ENCODE measurements at regions of chr7 and their contacts with region 1.

Region 1: DNA sequence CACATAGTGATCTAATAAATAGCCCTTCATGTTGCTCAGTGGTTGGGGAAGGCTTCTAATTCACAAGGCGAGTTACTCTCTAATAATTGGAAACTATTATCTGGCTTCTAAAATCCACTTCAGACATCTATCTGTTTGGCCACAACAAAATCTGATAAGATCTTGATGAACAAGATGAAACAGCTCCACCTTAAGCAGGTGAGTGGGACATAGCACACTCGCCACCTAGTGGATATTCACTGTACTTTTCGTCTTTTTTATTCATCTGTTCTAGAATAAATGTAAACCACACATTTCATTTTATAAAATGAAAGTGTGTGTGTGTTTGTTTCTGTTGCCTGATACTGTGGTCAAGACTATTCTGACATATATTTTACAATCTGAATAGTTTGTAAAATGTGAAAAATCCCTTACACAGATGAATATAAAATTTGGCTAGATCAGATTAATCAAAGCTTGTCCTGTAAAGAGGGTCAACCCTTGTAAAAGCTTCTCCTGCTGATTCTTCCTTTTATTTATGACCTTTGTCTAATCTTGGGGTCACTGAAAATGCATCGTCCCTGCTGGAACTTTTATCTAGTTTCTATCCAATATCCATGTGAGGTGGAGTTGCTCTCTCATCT is 26.5 kb upstream of the CNTNAP2 start:
- DNase-seq: peak; percentile 7
- ATAC-seq: peak; percentile 53
- H3K4me3 Mint-ChIP-seq: no peak overlapping the region
- H3K27ac Mint-ChIP-seq: no peak overlapping the region
- H3K4me1 Mint-ChIP-seq: no peaks in the 10 kb centered on the region
- H3K27me3 Mint-ChIP-seq: no peaks in the 10 kb centered on the region

Region 2: GRCh38 chr7:144854839-144855424 is 1235.2 kb before region 1 on chr7:
- CTCF ChIA-PET with region 1: no interaction called
- POLR2A ChIA-PET with region 1: no interaction called
- intact Hi-C with region 1: loop called (anchors 5 to 10 kb)
- DNase-seq: no peak
- ATAC-seq: no peak
- H3K4me3 Mint-ChIP-seq: no peak overlapping the region
- H3K27ac Mint-ChIP-seq: no peak overlapping the region
- H3K4me1 Mint-ChIP-seq: no peaks in the 10 kb centered on the region
- H3K27me3 Mint-ChIP-seq: peaks cover 2% of the 10 kb centered on the region

Region 3: DNA sequence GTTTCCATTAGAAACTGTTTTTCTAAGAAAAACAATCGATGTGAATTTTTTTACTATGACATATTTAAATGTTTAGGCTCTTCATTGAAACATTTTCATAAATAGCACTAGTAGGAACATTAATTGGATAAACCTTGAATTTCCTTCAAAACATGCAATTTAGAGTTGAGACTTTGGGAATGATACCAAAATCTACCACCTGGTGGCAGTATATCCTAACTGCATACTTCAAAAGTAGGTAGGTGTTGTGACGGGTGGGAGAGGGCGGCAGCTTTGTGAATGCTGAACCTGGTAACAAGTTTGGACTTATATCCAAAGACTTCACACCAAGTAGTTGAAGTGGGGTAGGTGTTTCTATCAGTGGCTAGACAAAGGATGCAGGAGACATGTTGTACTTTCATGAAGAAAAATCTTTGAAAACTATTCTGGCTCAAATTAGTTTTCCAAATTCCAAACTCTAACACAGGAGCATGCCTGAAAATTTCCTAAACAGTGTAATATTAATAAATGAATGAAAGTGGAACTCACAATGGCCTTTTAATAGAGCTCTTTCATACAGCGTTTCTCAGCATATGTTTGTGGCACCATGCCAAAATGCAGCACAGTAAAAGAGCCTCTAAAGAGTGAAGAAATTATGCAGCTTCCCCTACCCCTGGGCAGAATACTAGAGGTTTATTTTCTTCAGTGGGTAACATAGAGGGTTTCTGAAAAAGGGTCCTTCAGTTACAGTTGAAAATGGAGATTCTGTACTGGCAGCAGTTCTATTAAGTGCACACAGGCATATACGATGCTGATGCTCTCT is 1053.3 kb before region 1 on chr7:
- CTCF ChIA-PET with region 1: interaction called, 9 read pairs
- POLR2A ChIA-PET with region 1: no interaction called
- intact Hi-C with region 1: loop called (anchors 1 kb)
- DNase-seq: peak; percentile 45
- ATAC-seq: peak; percentile 57
- H3K4me3 Mint-ChIP-seq: no peak overlapping the region
- H3K27ac Mint-ChIP-seq: no peak overlapping the region
- H3K4me1 Mint-ChIP-seq: no peaks in the 10 kb centered on the region
- H3K27me3 Mint-ChIP-seq: peaks cover 15% of the 10 kb centered on the region

Region 4: DNA sequence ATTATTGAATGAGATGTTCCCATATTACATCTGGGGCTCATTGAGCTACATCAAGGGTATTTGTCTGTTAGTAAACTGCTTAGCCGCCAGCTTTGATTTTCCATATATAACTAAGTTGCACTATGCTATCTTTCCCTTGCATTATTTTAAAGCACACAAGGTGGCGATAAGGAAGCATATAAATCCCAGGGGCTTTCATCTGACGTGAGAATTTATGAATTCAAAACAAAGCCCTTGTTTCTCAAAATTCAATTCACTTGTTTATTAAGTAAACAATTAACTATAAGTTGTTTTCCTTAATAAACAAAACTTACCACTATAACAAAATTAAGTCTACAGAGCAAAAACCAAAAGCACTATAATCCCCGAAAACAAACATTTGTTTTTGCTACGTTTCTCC is 920.2 kb before region 1 on chr7:
- CTCF ChIA-PET with region 1: no interaction called
- POLR2A ChIA-PET with region 1: no interaction called
- intact Hi-C with region 1: loop called in 1 of 2 experiments (anchors 2 kb)
- DNase-seq: no peak
- ATAC-seq: no peak
- H3K4me3 Mint-ChIP-seq: no peak overlapping the region
- H3K27ac Mint-ChIP-seq: no peak overlapping the region
- H3K4me1 Mint-ChIP-seq: no peaks in the 10 kb centered on the region
- H3K27me3 Mint-ChIP-seq: peaks cover 4% of the 10 kb centered on the region

Region 5: DNA sequence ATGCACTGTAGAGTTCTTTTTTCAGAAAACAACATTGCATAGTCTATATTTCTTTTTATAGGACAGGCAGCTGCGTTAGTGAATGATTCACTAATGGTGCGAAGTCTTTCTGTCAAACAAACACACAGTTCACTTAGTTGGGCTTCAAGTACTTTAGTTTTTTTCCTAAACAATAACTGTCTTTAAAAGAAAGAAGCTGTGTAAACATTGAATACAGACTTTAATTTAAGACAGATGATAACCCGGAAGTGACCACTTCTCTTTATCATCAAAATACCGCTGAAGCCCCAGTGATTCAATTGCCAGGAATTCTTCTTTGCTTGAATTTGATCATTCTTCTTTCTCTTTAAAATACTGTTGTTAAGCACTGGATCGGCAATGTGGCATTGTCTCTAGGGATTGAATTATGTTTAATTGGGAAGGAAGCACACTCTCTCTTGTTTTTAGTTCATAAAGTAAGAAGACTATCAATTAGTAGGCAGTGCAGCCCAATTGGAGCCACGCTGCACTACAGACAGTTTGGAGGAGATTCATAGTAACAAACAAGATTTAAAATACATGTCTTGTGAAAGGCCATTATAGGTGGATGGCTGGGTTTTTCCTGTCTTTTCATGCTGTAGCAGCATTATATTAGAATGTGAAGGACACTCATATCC is 56.8 kb after region 1 on chr7:
- CTCF ChIA-PET with region 1: no interaction called
- POLR2A ChIA-PET with region 1: no interaction called
- intact Hi-C with region 1: no loop called
- DNase-seq: no peak
- ATAC-seq: no peak
- H3K4me3 Mint-ChIP-seq: no peak overlapping the region
- H3K27ac Mint-ChIP-seq: no peak overlapping the region
- H3K4me1 Mint-ChIP-seq: no peaks in the 10 kb centered on the region
- H3K27me3 Mint-ChIP-seq: no peaks in the 10 kb centered on the region

Measured in activated CD4-positive, alpha-beta T cell treated with anti-CD3 and anti-CD28 coated beads for 36 hours (primary cell).